GM10248 (cell line): ENCODE measurements at regions of chr17 and their contacts with region 1.

Region 1: GRCh38 chr17:48593840-48594537 is 410 bp upstream of the HOXB5 start:
- DNase-seq: peak; percentile 89
- CTCF ChIP-seq: peak; percentile 92

Region 2: DNA sequence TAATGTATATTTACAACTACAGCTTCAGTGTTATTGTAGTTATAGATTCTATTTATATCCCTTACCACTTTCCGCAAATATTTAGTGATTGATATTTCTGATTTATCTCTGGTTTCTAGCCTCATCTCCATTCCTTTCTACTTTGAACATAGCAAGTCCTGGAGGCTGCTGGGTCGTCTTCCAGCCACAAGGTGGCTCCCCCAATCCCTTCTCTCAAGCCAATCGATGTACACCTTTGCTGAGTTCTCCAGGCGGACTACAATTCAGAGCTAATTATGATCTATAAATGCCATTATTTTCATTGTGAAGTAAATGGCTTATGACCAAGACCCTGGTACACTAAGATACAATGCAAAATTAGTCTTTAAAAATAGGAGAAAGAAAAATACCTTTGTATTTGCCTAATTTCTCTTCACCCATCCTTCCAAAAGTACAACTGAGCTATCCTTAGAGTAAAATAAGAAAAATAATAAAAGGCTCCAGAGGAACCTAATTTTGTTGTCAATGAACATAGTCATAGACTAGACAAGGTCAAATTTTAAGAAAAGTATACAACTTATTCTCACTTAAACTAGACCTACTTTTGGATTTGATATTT is 286.1 kb before region 1 on chr17:
- CTCF ChIA-PET with region 1: interaction called, 15 read pairs
- POLR2A ChIA-PET with region 1: no interaction called
- DNase-seq: peak; percentile 41
- CTCF ChIP-seq: peak; percentile 68

Region 3: DNA sequence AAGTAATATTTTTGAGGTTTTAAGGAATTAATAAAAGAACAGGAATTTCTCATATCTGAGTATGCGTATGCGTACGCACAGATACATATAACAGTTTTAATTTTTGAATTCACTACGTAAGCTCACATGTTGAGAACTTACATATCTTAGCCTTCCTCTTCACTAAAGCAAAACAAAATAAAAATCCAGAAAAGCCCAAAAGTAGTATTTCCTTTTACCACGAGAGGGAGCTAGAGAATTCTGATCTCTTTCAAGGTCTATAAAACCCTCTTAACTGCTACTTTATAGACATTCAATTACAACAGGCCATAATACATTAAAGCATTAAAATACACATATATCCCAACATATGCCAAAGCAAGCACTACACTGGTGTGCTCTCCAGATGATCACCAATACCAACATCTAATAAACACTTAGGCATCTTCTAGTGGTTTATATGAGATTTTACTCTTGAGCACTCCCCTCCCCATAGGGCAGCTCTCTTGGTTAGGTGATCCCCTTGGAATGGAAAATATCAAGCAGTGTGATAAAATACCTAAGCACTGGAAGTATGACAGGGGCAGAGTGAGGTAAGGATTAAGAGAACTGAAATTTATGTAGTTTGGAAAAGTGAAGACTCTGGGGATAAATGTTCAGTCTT is 258.0 kb before region 1 on chr17:
- CTCF ChIA-PET with region 1: interaction called, 51 read pairs
- POLR2A ChIA-PET with region 1: no interaction called
- DNase-seq: peak; percentile 37
- CTCF ChIP-seq: peak; percentile 43

Region 4: GRCh38 chr17:48492401-48493298 is 101.3 kb before region 1 on chr17:
- CTCF ChIA-PET with region 1: interaction called, 20 read pairs
- POLR2A ChIA-PET with region 1: no interaction called
- DNase-seq: peak; percentile 83
- CTCF ChIP-seq: peak; percentile 90

Region 5: GRCh38 chr17:48612854-48613691 is 19.1 kb after region 1 on chr17:
- CTCF ChIA-PET with region 1: interaction called, 15 read pairs
- POLR2A ChIA-PET with region 1: interaction called, 8 read pairs
- DNase-seq: peak; percentile 69
- CTCF ChIP-seq: no peak

Region 6: DNA sequence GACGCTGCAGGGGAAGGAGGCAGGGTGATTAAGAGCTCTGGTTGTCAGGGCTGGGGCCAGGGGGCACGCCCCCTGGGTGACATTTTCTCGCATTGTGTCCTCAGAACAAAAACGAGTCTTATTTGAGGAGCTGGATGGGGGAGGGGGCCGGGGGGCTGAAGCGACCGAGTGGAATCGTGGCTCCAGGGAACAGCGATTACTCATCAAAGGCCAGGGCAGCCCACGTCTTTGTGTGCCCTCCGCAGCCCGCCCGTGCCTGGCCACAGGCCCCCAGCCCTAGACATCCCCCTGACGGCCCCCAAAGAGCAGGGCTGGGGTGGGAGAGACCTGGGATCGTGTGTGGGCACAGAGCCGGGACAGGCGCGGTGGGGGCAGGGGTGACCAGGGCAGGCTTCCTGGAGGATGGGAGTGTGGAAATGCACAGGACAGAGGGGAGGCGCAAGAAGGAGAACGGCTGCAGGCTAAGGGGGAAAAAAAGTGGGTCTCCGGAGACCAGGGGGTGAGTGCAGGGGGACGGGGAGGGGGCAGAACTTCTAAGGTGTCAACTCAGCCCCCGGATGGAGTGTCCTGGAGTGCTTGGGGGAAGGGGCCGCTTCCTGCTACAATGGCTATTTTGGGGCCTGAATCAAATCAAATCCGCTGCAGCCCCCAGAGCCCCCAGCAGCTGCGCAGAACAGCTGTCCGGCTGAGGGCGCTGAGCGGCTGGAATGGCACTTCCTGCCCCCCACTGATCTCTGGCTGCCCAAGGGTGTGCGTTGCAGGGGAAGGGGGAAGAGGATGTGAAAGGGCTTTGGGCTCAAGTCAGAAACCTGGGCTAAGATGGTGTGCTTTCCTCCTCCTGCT is 844.7 kb after region 1 on chr17:
- CTCF ChIA-PET with region 1: no interaction called
- POLR2A ChIA-PET with region 1: no interaction called
- DNase-seq: peak; percentile 48
- CTCF ChIP-seq: peak; percentile 13